Ovary (tissue), 10 donors: ENCODE measurements at regions of chr5 and their contacts with region 1.

Region 1: DNA sequence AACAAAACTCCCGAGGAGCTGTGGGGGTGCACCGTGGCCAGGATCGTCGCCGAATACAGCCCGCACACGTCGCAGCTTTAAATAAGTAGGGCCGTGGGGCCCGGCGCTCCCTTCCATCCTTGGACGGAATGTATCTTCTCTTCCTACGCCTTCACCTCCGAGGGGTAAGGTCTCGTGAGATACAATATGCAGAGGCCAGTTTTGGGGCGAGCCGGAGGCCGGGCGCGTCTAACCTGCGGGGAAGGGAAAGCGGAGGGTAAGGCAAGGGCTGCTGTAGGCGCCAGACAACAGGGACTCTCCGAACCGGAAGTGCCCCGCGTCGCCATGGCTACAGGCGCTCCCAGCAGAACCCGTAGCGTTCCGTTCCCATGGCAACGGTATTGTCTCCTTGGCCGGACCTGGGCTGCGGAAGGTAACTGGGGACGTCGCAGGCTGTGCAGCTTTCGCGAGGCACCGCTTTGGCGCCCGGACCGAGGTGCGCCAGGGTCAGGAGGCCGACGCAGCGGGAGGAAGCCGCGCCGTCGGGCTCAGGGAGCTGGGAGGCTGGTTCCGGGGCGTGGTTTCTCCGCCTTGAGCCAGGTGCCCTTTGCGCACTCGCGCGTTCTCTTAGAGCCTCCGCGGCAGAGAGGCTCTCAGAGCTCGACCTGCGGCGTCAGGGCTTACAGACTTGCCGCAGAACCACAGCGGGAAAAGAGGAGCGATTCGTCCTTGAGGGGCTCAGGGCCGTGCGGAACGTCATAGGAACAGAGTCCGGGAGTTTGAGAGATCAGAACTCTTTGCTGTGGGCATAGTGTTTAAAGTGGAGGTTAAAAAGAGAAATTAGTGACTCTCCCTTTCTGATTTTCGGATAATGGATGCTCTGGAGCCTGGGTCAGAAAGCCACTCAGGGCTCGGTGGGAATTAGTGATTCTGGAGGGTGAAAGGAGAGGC is at the start of gene TTC23L:
- DNase-seq: peak; percentile 88 to 92 (median 91)
- H3K4me3 ChIP-seq: peak within 1 kb of the TSS; percentile 75
- H3K27ac ChIP-seq: no peak within 1 kb of the TSS
- H3K4me1 ChIP-seq: peaks cover 3% of the 10 kb centered on the region
- H3K27me3 ChIP-seq: no peaks in the 10 kb centered on the region
- CTCF ChIP-seq: no peak
- EP300 ChIP-seq: no peak
- POLR2A ChIP-seq: peak; percentile 26
- total RNA-seq, gene TTC23L: 0.15 to 3.3 (median 0.92) TPM

Region 2: DNA sequence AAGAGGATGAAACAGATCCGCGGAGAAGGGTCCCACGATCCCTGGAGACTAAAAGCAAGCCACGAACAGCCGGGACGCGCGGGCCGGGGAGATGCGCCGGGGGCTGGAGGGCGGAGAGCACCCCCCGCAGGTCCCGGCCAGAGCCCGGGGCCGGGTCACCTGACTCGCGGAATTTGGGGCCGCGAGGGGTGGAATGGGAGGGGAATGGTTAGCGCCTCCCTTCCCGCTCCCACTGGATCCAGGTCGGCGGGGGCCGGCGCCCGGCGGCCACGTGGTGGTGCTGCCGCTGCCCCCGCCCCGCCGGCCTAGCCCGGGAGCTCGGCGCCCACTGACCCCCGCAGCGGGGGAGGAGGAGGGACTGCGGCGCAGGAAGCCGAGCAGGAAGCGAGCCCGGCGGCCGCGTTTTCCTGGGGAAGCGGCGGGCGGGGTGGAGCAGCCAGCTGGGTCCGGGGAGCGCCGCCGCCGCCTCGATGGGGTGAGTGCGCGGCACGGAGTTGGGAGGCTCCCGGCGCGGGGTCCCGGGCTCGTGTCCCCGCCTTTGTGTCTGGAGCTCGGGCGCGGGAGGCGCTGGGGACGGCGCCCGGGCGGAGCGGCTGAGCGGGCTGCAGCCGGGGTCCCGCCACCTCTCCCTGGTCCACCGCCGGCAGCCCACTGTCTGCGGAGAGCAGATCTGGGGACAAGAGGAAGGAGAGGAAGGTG is 182.9 kb before region 1 on chr5 and contains the start of gene RAI14:
- intact Hi-C with region 1: loop called in 2 of 4 experiments (anchors 10 kb)
- DNase-seq: peak; percentile 84 to 89 (median 85)
- H3K4me3 ChIP-seq: peak within 1 kb of the TSS; percentile 81
- H3K27ac ChIP-seq: peak within 1 kb of the TSS; percentile 73 to 87
- H3K4me1 ChIP-seq: no peaks in the 10 kb centered on the region
- H3K27me3 ChIP-seq: no peaks in the 10 kb centered on the region
- CTCF ChIP-seq: peak in 1 of 3 donors; percentile 13
- EP300 ChIP-seq: no peak
- POLR2A ChIP-seq: peak; percentile 33
- total RNA-seq, gene RAI14: 15.4 to 36.1 (median 27.9) TPM